ENCODE measurements at regions of chr19 and their contacts with region 1.

Region 1: GRCh38 chr19:50794439-50795237 is 4.4 kb downstream of the ACP4 start:
- DNase-seq: peak; percentile 69 to 71
- H3K4me3 ChIP-seq: no peak overlapping the region
- H3K4me3 Mint-ChIP-seq: no peak overlapping the region
- H3K27ac Mint-ChIP-seq: peak overlapping the region; percentile 30
- H3K4me1 ChIP-seq: no peaks in the 10 kb centered on the region
- H3K4me1 Mint-ChIP-seq: peaks cover 7% of the 10 kb centered on the region
- H3K27me3 ChIP-seq: no peaks in the 10 kb centered on the region
- H3K27me3 Mint-ChIP-seq: peaks cover 5% of the 10 kb centered on the region
- CTCF ChIP-seq: peak; percentile 11 to 40

Region 2: DNA sequence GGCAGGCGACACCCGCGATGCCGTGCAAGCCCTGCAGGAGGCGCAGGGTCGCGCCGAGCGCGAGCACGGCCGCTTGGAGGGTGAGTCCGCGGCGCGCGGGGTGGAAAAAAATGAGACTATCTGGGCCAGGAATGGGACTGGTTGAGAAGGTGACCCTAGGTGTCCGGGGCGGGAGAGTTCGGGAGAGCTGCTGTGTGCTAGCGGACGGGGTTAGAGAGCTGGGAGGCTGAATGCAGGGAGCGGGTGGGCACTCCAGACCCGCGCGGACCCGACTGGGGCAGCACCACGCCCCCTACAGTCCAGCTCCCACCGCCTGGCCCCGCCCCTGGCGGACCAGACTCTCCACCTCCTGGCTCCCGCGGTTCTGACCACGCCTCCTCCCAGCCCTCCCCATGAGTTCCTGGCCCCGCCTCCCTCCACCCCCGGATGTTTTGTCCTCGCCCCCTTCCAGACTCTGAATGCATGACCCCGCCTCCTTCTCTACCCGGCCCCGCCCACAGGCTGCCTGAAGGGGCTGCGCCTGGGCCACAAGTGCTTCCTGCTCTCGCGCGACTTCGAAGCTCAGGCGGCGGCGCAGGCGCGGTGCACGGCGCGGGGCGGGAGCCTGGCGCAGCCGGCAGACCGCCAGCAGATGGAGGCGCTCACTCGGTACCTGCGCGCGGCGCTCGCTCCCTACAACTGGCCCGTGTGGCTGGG is 70.0 kb before region 1 on chr19:
- CTCF ChIA-PET with region 1: interaction called, 11 read pairs
- POLR2A ChIA-PET with region 1: no interaction called
- intact Hi-C with region 1: no loop called
- DNase-seq: peak; percentile 95 to 97
- H3K4me3 ChIP-seq: peak overlapping the region; percentile 68
- H3K4me3 Mint-ChIP-seq: peak overlapping the region; percentile 76
- H3K27ac Mint-ChIP-seq: peak overlapping the region; percentile 61
- H3K4me1 ChIP-seq: no peaks in the 10 kb centered on the region
- H3K4me1 Mint-ChIP-seq: peaks cover 10% of the 10 kb centered on the region
- H3K27me3 ChIP-seq: no peaks in the 10 kb centered on the region
- H3K27me3 Mint-ChIP-seq: peaks cover 20% of the 10 kb centered on the region
- CTCF ChIP-seq: peak; percentile 52 to 78

Region 3: DNA sequence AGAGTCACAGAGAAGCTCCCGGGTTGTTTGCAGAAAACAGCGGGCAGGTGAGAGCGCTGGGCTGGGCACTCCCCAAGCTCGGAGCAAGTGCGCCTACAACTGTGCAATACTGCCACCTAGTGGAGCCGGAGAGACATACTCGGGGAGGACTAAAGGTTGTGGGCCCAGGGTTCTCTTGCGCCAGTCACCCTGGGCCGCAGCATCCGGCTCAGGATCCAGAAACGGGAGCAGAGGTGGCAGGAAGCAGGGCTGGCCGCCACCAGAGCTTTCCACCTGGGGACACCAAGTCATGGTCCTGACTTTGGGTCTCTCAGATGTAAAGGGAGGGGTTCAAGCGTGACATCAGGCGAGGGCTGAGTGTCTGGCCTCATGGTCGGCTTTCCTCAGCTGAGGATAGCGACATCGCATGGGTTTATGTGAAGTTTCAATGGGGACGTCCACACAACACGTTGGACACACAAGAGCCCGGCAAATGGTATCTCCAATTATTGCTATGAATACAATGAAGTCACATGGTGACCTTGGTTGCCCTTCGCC is 127.7 kb after region 1 on chr19:
- CTCF ChIA-PET with region 1: interaction called, 11 read pairs
- POLR2A ChIA-PET with region 1: no interaction called
- intact Hi-C with region 1: loop called (anchors 2 kb)
- DNase-seq: peak; percentile 80 to 86
- H3K4me3 ChIP-seq: no peak overlapping the region
- H3K4me3 Mint-ChIP-seq: no peak overlapping the region
- H3K27ac Mint-ChIP-seq: no peak overlapping the region
- H3K4me1 ChIP-seq: no peaks in the 10 kb centered on the region
- H3K4me1 Mint-ChIP-seq: no peaks in the 10 kb centered on the region
- H3K27me3 ChIP-seq: no peaks in the 10 kb centered on the region; the same call in 1 of the 2 replicates
- H3K27me3 Mint-ChIP-seq: peaks cover 17% of the 10 kb centered on the region
- CTCF ChIP-seq: peak; percentile 86 to 93

Region 4: DNA sequence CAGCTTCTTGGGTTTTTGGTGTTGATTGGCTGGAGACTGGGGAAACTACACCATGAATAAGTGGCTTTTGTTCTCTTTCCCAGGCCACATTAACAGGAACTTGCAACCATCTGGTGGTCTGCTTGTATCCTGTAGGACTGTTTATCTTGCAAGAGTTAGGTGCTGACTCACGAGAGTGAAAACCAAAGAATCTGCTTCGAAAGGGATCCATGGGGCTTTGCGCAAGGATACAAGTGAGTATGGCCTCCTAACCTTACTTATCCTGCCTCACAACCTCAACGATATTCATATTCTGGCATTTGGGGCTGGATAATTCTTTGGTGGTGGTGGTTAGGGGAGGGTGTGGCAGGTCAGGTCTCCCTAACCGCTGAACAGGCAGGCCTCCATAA is 451.5 kb after region 1 on chr19:
- CTCF ChIA-PET with region 1: no interaction called
- POLR2A ChIA-PET with region 1: no interaction called
- intact Hi-C with region 1: no loop called
- DNase-seq: no peak
- H3K4me3 ChIP-seq: no peak overlapping the region
- H3K4me3 Mint-ChIP-seq: no peak overlapping the region
- H3K27ac Mint-ChIP-seq: no peak overlapping the region
- H3K4me1 ChIP-seq: no peaks in the 10 kb centered on the region
- H3K4me1 Mint-ChIP-seq: no peaks in the 10 kb centered on the region
- H3K27me3 ChIP-seq: no peaks in the 10 kb centered on the region
- H3K27me3 Mint-ChIP-seq: peaks cover 5% of the 10 kb centered on the region
- CTCF ChIP-seq: no peak